A549 (cell line): ENCODE measurements at regions of chr5 and their contacts with region 1.

Region 1: DNA sequence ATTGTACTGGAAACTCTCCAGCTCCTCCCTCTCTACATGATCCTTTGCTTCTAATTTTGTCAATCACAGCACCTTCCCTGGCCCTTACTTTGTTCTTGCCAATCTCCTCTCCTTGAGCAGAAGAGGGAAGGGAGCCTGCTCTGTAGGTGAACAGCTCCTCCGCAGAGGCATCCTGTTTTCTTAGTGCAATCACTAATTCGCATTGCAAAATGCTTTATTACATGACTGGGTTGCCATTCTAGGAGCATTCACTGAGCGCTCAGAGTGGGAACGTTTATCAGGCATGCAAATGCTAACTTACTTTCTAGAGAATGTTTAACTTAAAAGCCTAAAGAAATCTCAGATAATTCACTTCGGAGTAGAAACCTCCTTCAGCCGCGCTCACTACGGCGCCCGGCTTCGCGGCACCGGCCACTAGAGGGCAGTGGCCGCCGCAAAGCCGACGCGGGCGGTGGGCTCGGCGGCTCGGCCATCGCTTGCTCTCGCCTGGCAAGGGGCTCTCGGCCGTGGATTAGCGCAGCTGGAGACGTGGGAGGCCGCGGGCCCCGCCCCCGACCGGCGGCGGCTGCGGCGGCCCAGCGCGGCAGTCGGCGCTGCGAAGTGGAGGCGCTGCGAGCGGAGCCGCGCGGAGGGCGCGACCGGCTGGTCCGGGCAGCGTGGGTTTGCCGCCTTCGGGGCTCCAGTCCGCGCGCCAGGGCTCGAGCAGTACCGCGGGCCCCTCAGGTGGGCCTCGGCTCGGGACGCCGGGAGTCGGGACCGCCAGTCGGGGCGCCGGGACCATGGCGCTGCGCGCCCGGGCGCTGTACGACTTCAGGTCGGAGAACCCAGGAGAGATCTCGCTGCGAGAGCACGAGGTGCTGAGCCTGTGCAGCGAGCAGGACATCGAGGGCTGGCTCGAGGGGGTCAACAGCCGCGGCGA is at the start of gene SNX18:
- DNase-seq: peak; percentile 71 to 90
- ATAC-seq: peak; percentile 92 to 93
- H3K4me3 ChIP-seq: peak within 1 kb of the TSS; percentile 87
- H3K27ac ChIP-seq: peak within 1 kb of the TSS; percentile 79 to 98
- H3K4me1 ChIP-seq: peaks cover 8% of the 10 kb centered on the region; the same call in 1 of the 3 replicates
- CTCF ChIP-seq: peak; percentile 98
- EP300 ChIP-seq: 0 out of 5 replicates have a peak, but pooled peaks of 1 of the 2 experiments have one; percentile 17
- POLR2A ChIP-seq: peak; percentile 86
- RAD21 ChIP-seq: peak; percentile 84 to 99
- polyA plus RNA-seq, gene SNX18: 6.4 and 8.1 TPM in 2 replicates

Region 2: GRCh38 chr5:54080831-54081230 is 436.6 kb before region 1 on chr5:
- CTCF ChIA-PET with region 1: no interaction called
- POLR2A ChIA-PET with region 1: no interaction called
- DNase-seq: no peak
- ATAC-seq: no peak
- H3K4me3 ChIP-seq: no peak overlapping the region
- H3K27ac ChIP-seq: no peak overlapping the region
- H3K4me1 ChIP-seq: peaks cover 4% of the 10 kb centered on the region; the same call in 1 of the 3 replicates
- CTCF ChIP-seq: no peak
- EP300 ChIP-seq: no peak
- POLR2A ChIP-seq: no peak
- RAD21 ChIP-seq: no peak

Region 3: DNA sequence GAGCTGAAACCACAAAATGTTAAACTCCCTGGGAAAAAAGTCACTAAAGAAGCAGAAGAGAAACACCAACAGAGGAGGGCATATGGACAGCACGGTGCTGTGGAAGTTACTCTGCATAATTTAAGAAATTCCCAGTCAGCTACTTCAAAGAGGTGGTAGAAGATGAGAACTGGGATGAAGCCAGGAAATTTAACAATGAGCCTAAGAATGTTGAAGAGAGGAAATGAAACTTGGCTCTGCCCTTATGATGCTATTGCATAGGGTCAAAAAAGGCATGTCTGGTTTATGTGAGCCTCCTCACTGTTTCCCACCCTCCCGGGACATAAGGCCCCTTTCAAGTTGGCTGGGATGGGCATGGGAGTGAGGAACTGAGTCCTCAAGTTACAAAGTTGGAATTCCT is 25.3 kb before region 1 on chr5:
- CTCF ChIA-PET with region 1: interaction called, 15 read pairs
- POLR2A ChIA-PET with region 1: no interaction called
- DNase-seq: no peak
- ATAC-seq: no peak
- H3K4me3 ChIP-seq: no peak overlapping the region
- H3K27ac ChIP-seq: no peak overlapping the region
- H3K4me1 ChIP-seq: no peaks in the 10 kb centered on the region
- CTCF ChIP-seq: no peak
- EP300 ChIP-seq: no peak
- POLR2A ChIP-seq: no peak
- RAD21 ChIP-seq: no peak

Region 4: GRCh38 chr5:54807421-54807820 is 290.0 kb after region 1 on chr5:
- CTCF ChIA-PET with region 1: interaction called, 10 read pairs
- POLR2A ChIA-PET with region 1: no interaction called
- DNase-seq: peak; percentile 4 to 33
- ATAC-seq: peak; percentile 43; a peak in 4 of 6 replicates
- H3K4me3 ChIP-seq: no peak overlapping the region
- H3K27ac ChIP-seq: no peak overlapping the region
- H3K4me1 ChIP-seq: peaks cover 7% of the 10 kb centered on the region; the same call in 2 of the 3 replicates
- CTCF ChIP-seq: no peak
- EP300 ChIP-seq: no peak
- POLR2A ChIP-seq: no peak
- RAD21 ChIP-seq: no peak

Region 5: GRCh38 chr5:54844905-54845566 is 327.6 kb after region 1 on chr5:
- CTCF ChIA-PET with region 1: interaction called, 89 read pairs
- POLR2A ChIA-PET with region 1: interaction called, 11 read pairs
- DNase-seq: peak in 1 of 2 experiments; percentile 35
- ATAC-seq: peak in 1 of 2 experiments; percentile 54; a peak in 1 of 6 replicates
- H3K4me3 ChIP-seq: no peak overlapping the region
- H3K27ac ChIP-seq: no peak overlapping the region
- H3K4me1 ChIP-seq: no peaks in the 10 kb centered on the region
- CTCF ChIP-seq: peak; percentile 72
- EP300 ChIP-seq: no peak
- POLR2A ChIP-seq: no peak
- RAD21 ChIP-seq: peak; percentile 64 to 79

Region 6: GRCh38 chr5:54867310-54867944 is 350.0 kb after region 1 on chr5:
- CTCF ChIA-PET with region 1: interaction called, 55 read pairs
- POLR2A ChIA-PET with region 1: interaction called, 5 read pairs
- DNase-seq: peak; percentile 41 to 50
- ATAC-seq: peak in 1 of 2 experiments; percentile 67; a peak in 3 of 6 replicates
- H3K4me3 ChIP-seq: no peak overlapping the region
- H3K27ac ChIP-seq: no peak overlapping the region
- H3K4me1 ChIP-seq: no peaks in the 10 kb centered on the region
- CTCF ChIP-seq: peak; percentile 70
- EP300 ChIP-seq: no peak
- POLR2A ChIP-seq: no peak
- RAD21 ChIP-seq: peak; percentile 57 to 63

Region 7: GRCh38 chr5:54883374-54884212 is 366.2 kb after region 1 on chr5:
- CTCF ChIA-PET with region 1: interaction called, 11 read pairs
- POLR2A ChIA-PET with region 1: no interaction called
- DNase-seq: no peak
- ATAC-seq: peak in 1 of 2 experiments; percentile 66; a peak in 3 of 6 replicates
- H3K4me3 ChIP-seq: peak overlapping the region; percentile 40
- H3K27ac ChIP-seq: peak overlapping the region in 1 of 2 experiments; percentile 59; a peak in 2 of 6 replicates
- H3K4me1 ChIP-seq: no peaks in the 10 kb centered on the region
- CTCF ChIP-seq: no peak
- EP300 ChIP-seq: no peak
- POLR2A ChIP-seq: no peak
- RAD21 ChIP-seq: no peak

Region 8: DNA sequence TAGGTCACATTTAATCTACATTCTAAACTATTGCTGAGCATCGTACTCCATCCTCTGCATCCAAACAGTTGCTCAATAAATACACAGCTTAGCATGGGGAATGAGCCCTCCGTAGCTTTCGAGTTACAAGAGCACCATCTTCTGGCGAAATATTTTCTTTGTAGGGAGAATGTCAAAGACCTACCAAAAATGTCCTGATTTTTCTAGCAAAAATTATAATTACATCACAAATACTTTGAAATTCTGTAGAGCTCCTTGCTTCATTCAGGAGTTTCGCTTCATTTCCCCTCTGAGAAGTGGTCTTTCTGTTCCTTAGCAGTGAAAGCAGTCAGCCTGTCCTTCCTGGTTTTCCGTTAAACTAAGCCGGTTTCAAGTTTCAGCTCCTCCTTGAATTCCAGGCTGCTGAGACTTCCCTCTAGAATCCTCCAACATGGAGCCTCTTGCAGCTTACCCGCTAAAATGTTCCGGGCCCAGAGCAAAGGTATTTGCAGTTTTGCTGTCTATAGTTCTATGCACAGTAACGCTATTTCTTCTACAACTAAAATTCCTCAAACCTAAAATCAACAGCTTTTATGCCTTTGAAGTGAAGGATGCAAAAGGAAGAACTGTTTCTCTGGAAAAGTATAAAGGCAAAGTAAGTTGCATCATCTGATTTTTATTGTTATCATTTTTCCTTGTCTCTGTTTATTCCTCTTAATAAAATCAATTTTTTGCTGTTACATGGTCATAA is 642.5 kb after region 1 on chr5 and contains the start of gene GPX8:
- CTCF ChIA-PET with region 1: interaction called, 20 read pairs
- POLR2A ChIA-PET with region 1: interaction called, 11 read pairs
- DNase-seq: peak; percentile 76 to 88
- ATAC-seq: peak; percentile 95 to 97
- H3K4me3 ChIP-seq: peak within 1 kb of the TSS; percentile 54
- H3K27ac ChIP-seq: peak within 1 kb of the TSS; percentile 85 to 87
- H3K4me1 ChIP-seq: peaks cover 7% of the 10 kb centered on the region; the same call in 2 of the 3 replicates
- CTCF ChIP-seq: peak; percentile 97
- EP300 ChIP-seq: no peak
- POLR2A ChIP-seq: peak; percentile 27
- RAD21 ChIP-seq: peak; percentile 92 to 93
- polyA plus RNA-seq, gene GPX8: 67.9 and 86.0 TPM in 2 replicates